Ascending aorta (tissue), 2 donors: ENCODE measurements at regions of chr10 and their contacts with region 1.

Region 1: DNA sequence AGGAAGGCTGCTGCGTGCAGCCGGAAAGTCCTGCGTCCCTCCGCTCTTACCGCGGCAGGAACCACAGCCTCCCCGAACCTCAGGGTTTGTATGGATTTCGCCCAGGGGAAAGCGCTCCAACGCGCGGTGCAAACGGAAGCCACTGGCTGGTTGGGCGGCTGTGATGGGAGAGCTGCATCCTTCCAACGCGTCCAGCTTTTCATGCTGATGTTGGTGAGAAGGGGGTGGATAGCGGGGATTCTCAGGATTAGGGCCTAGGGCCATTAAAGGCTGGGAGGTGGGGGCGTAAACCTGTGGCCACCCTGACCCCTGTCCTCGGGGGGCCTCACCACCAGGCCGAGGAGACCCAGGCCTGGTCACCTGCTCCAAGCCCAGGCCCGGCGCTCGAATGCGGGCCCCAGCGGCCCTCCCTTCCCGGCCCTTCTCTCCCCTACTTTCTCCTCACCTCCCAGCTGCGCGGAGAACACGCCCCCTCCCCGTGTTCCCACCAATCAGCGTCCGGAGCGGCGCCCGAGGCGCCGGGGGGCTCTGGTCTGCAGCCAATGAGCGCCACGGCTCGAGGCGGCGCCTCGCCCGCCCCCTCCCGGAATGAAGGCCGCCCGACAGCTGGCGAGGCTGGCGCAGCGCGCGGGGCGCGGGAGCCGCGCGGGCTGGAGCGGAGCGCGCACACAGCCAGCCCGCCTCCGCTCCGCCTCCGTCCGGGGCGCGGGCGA is 458 bp upstream of the NANOS1 start:
- DNase-seq: peak in 1 of 2 donors; percentile 94
- H3K4me3 ChIP-seq: peak overlapping the region; percentile 73 to 88
- H3K27ac ChIP-seq: peak overlapping the region; percentile 80 to 85
- H3K4me1 ChIP-seq: peaks cover 20 to 30% of the 10 kb centered on the region in 2 donors
- H3K27me3 ChIP-seq: no peaks in the 10 kb centered on the region
- CTCF ChIP-seq: peak in 2 of 3 experiments; percentile 27 to 30

Region 2: DNA sequence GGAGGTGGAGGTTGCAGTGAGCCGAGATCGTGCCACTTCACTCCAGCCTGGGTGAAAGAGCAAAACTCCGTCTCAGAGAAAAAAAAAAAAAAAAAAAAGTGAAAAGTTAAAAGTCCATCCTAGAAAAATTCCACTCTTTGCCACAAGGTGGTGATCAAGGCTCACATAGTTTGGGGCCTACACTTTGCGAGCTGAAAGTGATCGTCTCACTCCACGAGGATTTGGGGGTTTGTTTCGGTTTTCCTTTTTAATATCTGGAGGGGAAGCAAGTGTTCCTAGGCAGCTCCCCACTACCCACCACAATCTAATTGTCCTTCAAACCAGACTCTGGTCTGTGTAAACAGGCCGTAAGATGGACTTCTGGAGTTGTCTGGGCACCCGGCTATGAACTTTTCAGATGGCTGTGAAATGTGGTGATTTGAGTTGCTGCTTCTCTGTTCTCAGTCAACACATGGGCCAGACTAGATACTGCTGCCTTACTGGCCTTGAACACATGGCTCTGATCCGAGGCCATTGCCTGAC is 460.7 kb before region 1 on chr10:
- intact Hi-C with region 1: loop called (anchors 10 kb)
- DNase-seq: no peak
- H3K4me3 ChIP-seq: peak overlapping the region in 1 of 2 donors; percentile 27
- H3K27ac ChIP-seq: no peak overlapping the region
- H3K4me1 ChIP-seq: peaks cover 0 to 3% of the 10 kb centered on the region in 2 donors
- H3K27me3 ChIP-seq: no peaks in the 10 kb centered on the region
- CTCF ChIP-seq: peak; percentile 70 to 81 (median 73)

Region 3: GRCh38 chr10:118958984-118959916 is 69.8 kb before region 1 on chr10:
- intact Hi-C with region 1: no loop called
- DNase-seq: peak; percentile 29 to 67
- H3K4me3 ChIP-seq: no peak overlapping the region
- H3K27ac ChIP-seq: no peak overlapping the region
- H3K4me1 ChIP-seq: peaks cover 7 to 20% of the 10 kb centered on the region in 2 donors
- H3K27me3 ChIP-seq: no peaks in the 10 kb centered on the region
- CTCF ChIP-seq: no peak

Region 4: DNA sequence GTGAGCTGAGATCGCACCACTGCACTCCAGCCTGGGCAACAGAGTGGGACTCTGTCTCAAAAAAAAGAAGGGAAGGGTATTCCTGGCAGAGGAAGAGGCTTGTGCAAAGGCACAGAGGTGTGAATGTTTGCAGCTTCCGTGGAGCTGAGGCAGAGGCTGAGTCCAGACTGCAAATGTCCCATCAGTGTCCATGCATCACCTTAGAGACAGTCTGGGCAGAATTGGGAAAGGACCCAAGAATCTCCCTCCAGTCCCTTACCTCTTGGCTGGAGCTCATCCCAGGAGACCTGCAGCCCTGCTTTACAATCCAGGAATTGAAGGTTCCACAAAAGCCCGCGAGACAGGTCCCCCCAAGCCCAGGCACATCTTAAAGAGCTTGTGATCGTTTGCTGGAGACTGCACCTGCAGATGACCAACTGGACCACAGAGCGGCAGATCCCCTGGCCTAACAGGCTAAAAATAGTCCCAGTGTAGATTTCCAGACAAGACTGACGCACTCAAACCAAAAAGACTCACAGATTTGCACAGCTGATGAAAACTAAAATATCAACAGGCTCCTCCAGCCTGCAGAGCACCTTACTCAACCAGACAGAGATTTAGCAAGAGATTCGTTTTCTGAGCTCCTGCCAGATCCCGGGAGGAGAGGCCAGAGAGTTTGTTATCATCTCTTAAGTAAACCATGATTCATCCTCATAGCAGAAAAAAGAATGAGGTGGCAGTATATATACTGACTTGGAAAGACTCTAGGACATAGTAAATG is 22.4 kb before region 1 on chr10:
- intact Hi-C with region 1: loop called (anchors 2 kb)
- DNase-seq: peak in 1 of 2 donors; percentile 87
- H3K4me3 ChIP-seq: no peak overlapping the region
- H3K27ac ChIP-seq: peak overlapping the region; percentile 3 to 4
- H3K4me1 ChIP-seq: peaks cover 0 to 7% of the 10 kb centered on the region in 2 donors
- H3K27me3 ChIP-seq: no peaks in the 10 kb centered on the region
- CTCF ChIP-seq: no peak

Region 5: GRCh38 chr10:119080521-119081260 is 51.6 kb after region 1 on chr10 and contains the start of gene EIF3A:
- intact Hi-C with region 1: loop called (anchors 2 kb)
- DNase-seq: peak; percentile 61 to 95
- H3K4me3 ChIP-seq: peak within 1 kb of the TSS; percentile 88 to 92
- H3K27ac ChIP-seq: peak within 1 kb of the TSS; percentile 96 to 98
- H3K4me1 ChIP-seq: peaks cover 0 to 23% of the 10 kb centered on the region in 2 donors
- H3K27me3 ChIP-seq: no peaks in the 10 kb centered on the region
- CTCF ChIP-seq: no peak
- total RNA-seq, gene EIF3A: 59.4 TPM

Region 6: GRCh38 chr10:119872860-119873681 is 844.0 kb after region 1 on chr10:
- intact Hi-C with region 1: loop called (anchors 5 kb)
- DNase-seq: peak; percentile 30 to 91
- H3K4me3 ChIP-seq: peak overlapping the region; percentile 72 to 91
- H3K27ac ChIP-seq: peak overlapping the region; percentile 85 to 90
- H3K4me1 ChIP-seq: peaks cover 0 to 18% of the 10 kb centered on the region in 2 donors
- H3K27me3 ChIP-seq: no peaks in the 10 kb centered on the region
- CTCF ChIP-seq: no peak